H1 (cell line): ENCODE measurements at regions of chr12 and their contacts with region 1.

Region 1: DNA sequence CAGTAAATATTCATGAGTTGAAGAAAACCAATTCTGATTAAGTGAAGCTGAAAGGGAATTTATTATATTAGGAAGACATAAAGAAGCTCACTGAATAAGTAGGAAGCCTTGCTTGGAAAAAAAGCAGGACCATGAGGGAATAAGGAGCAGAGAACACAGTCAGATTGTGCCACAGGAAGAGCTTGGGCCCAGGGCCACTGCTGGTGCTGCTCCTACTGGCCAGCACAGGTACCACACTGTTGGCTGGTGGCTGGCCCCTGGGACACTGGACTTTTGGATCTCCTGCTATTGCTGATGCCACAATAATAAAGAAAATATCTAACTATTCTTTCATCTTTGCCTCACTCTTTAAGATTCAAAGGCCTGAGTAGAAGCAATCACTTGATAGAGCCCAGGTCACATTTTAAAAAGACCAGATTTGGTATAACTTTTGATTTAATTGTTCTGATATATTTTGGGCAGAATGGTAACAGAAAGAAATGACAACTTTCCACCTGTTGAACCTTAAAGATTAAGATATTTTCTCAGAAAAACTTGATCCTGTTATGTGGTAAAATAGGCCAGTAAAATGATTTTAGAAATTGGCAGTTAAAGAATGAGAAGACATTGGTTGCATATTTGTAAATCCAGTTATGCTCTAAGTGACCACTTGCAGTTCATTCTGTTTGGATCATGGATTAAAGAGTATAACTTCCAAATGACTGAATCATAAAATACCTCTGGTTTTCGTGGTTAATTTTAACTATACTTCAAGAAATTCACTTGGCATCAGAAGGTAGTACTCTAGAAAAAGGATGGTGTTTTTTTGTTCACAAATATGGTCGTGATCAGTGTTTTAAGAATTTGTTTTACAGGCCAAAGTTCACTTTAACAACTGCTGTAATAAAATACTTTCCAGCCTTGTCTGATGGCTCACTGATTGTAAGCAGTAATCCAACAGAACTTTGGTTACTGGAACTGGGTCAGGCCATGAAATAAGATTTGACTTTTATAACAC is 68.3 kb downstream of the DERA start:
- DNase-seq: no peak
- H3K4me3 ChIP-seq: no peak overlapping the region
- H3K27ac ChIP-seq: no peak overlapping the region
- H3K4me1 ChIP-seq: no peaks in the 10 kb centered on the region
- H3K27me3 ChIP-seq: no peaks in the 10 kb centered on the region
- CTCF ChIP-seq: peak; percentile 56 to 90 (median 78)
- EP300 ChIP-seq: no peak
- POLR2A ChIP-seq: no peak
- RAD21 ChIP-seq: peak; percentile 46 to 63

Region 2: GRCh38 chr12:15532364-15532977 is 446.9 kb before region 1 on chr12:
- CTCF ChIA-PET with region 1: no interaction called
- POLR2A ChIA-PET with region 1: no interaction called
- DNase-seq: peak; percentile 36 to 56
- H3K4me3 ChIP-seq: no peak overlapping the region
- H3K27ac ChIP-seq: no peak overlapping the region
- H3K4me1 ChIP-seq: no peaks in the 10 kb centered on the region
- H3K27me3 ChIP-seq: no peaks in the 10 kb centered on the region
- CTCF ChIP-seq: peak in 2 of 3 experiments; percentile 70 to 76; a peak in 3 of 4 replicates
- EP300 ChIP-seq: no peak
- POLR2A ChIP-seq: no peak
- RAD21 ChIP-seq: peak; percentile 85 to 87

Region 3: DNA sequence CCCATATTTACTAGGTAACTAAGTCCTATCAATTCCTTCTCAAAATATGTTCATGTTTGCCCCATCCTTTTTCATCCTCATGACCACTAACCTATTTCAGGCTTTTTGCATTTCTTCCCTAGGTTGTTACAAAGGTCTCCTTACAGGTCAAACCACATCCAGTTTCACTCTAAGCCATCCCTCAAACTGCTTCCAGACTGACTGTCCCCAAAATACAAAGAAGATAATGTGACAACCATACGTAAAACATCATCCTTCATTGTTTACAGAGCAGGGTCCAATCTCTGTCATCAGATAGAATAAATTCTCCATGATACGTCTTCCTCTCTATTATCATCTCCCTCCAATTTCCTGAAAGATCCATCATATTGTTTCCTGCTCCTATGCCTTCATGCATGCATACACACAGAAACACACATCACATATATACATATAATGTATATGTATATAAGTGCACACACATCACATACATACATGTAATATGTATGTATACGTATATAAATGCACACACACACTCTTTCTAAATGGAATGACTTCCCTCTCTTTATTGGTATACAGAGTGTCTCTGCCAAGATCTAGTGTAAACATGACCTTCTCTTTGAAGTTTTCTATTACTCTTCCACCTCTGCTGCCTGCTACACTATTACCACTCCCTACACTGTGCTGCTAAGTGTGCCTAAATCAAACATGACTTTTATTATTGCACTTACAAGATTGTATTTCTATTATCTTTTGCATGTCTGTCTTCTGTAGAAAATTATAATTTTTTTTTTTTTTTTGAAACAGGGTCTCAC is 159.6 kb before region 1 on chr12:
- CTCF ChIA-PET with region 1: no interaction called
- POLR2A ChIA-PET with region 1: no interaction called
- DNase-seq: no peak
- H3K4me3 ChIP-seq: no peak overlapping the region
- H3K27ac ChIP-seq: no peak overlapping the region
- H3K4me1 ChIP-seq: no peaks in the 10 kb centered on the region
- H3K27me3 ChIP-seq: no peaks in the 10 kb centered on the region
- CTCF ChIP-seq: no peak
- EP300 ChIP-seq: no peak
- POLR2A ChIP-seq: no peak
- RAD21 ChIP-seq: no peak

Region 4: DNA sequence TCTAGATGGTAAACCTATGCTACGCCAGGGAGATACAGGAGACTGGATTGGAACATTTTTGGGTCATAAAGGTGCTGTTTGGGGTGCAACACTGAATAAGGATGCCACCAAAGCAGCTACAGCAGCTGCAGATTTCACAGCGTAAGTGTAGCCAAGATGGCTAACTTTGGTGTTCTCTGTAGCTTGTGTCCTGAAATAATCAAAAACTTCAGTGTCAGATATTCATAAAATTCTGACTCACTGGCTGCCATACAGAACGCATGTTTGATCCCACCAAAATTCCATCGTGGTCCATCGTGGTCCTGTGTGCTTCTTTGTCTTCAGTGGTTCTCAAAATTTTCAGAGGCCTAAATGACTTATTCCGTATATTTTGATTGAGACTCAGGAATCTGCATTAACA is 95.9 kb before region 1 on chr12:
- CTCF ChIA-PET with region 1: no interaction called
- POLR2A ChIA-PET with region 1: no interaction called
- DNase-seq: no peak
- H3K4me3 ChIP-seq: peak overlapping the region; percentile 79 to 90 (median 86)
- H3K27ac ChIP-seq: no peak overlapping the region
- H3K4me1 ChIP-seq: no peaks in the 10 kb centered on the region; a peak in 1 of 7 replicates
- H3K27me3 ChIP-seq: no peaks in the 10 kb centered on the region
- CTCF ChIP-seq: no peak
- EP300 ChIP-seq: no peak
- POLR2A ChIP-seq: no peak
- RAD21 ChIP-seq: no peak

Region 5: DNA sequence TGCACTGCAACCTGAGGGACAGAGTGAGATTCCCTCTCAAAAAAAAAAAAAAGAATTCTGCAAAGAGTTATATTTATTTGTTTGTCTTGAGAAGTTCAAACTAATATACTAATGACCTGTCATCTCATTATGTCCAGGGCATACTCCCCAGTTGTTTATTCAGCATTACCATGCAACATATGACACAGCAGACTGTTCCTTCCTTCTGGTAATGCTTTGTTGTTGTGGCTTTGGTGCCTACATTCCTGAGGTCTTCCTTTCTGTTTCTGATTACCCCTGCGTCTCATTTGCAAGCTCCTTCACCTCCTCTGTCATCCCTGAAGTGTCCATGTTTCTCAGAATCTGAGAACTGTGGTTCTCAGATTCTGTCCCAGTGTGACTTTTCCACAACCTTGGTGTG is 13.0 kb before region 1 on chr12:
- CTCF ChIA-PET with region 1: interaction called, 59 read pairs
- POLR2A ChIA-PET with region 1: interaction called, 3 read pairs
- DNase-seq: no peak
- H3K4me3 ChIP-seq: no peak overlapping the region
- H3K27ac ChIP-seq: no peak overlapping the region; the same call in 1 of the 2 replicates
- H3K4me1 ChIP-seq: no peaks in the 10 kb centered on the region
- H3K27me3 ChIP-seq: no peaks in the 10 kb centered on the region
- CTCF ChIP-seq: no peak
- EP300 ChIP-seq: no peak
- POLR2A ChIP-seq: no peak
- RAD21 ChIP-seq: no peak

Region 6: DNA sequence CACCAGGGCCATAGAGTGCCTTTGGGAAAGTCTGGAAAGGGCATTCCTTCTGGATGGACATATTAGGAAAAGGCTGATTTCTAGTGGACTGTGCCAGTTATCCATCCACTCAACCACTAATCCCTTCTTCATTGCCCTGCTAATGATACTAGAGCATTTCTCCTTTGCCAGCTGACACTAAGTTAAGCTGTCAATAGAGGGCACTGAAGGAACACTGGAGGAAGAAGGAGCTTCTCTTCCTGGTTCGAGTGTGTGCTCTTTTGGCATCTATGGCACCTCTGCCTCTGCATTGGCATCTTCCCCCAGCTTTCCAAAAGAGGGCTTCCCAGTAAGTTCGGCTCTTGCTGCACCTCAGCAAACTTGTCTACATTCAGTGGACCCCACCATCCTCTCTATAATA is 97.2 kb after region 1 on chr12:
- CTCF ChIA-PET with region 1: no interaction called
- POLR2A ChIA-PET with region 1: no interaction called
- DNase-seq: no peak
- H3K4me3 ChIP-seq: no peak overlapping the region
- H3K27ac ChIP-seq: no peak overlapping the region
- H3K4me1 ChIP-seq: no peaks in the 10 kb centered on the region
- H3K27me3 ChIP-seq: no peaks in the 10 kb centered on the region
- CTCF ChIP-seq: peak in 2 of 3 experiments; percentile 63 to 90; a peak in 3 of 4 replicates
- EP300 ChIP-seq: no peak
- POLR2A ChIP-seq: no peak
- RAD21 ChIP-seq: peak; percentile 94 to 95